Activated CD8-positive, alpha-beta T cell treated with anti-CD3 and anti-CD28 coated beads for 36 hours (primary cell): ENCODE measurements at regions of chr12 and their contacts with region 1.

Region 1: GRCh38 chr12:121793838-121794533 is 498 bp upstream of the RHOF start:
- DNase-seq: peak; percentile 95
- ATAC-seq: peak; percentile 60
- H3K4me3 Mint-ChIP-seq: peak overlapping the region; percentile 89
- H3K27ac Mint-ChIP-seq: peak overlapping the region; percentile 91
- H3K4me1 Mint-ChIP-seq: peaks cover 54% of the 10 kb centered on the region
- H3K27me3 Mint-ChIP-seq: no peaks in the 10 kb centered on the region
- CTCF ChIP-seq: peak; percentile 99

Region 2: GRCh38 chr12:121688966-121689365 is 105.0 kb before region 1 on chr12:
- CTCF ChIA-PET with region 1: interaction called, 102 read pairs
- POLR2A ChIA-PET with region 1: interaction called, 3 read pairs
- intact Hi-C with region 1: loop called (anchors 5 kb)
- DNase-seq: no peak
- ATAC-seq: no peak
- H3K4me3 Mint-ChIP-seq: no peak overlapping the region
- H3K27ac Mint-ChIP-seq: no peak overlapping the region
- H3K4me1 Mint-ChIP-seq: peaks cover 5% of the 10 kb centered on the region
- H3K27me3 Mint-ChIP-seq: no peaks in the 10 kb centered on the region
- CTCF ChIP-seq: no peak

Region 3: DNA sequence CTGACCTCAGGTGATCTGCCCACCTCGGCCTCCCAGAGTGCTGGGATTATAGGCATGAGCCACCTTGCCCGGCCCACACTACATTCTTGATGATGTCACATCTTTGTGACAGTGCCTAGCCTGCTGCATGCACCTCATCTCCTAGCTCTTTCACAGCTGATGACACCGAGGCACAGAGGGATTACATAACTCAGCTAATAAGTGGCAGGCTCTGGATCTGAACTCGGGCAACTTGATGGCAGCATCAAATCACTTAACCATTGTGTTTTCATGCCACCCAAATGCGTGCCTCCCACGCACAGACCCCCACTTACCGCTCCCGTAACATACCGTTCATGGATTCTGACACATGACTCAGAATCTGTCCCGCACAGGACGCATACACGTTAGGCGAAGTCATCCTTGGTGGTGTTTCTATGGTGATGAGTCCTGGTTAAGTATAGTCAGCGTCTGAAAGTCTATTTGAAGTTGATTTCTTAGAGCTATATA is 74.0 kb before region 1 on chr12:
- CTCF ChIA-PET with region 1: interaction called, 27 read pairs
- POLR2A ChIA-PET with region 1: interaction called, 4 read pairs
- intact Hi-C with region 1: no loop called
- DNase-seq: peak; percentile 12
- ATAC-seq: peak; percentile 34
- H3K4me3 Mint-ChIP-seq: no peak overlapping the region
- H3K27ac Mint-ChIP-seq: no peak overlapping the region
- H3K4me1 Mint-ChIP-seq: peaks cover 12% of the 10 kb centered on the region
- H3K27me3 Mint-ChIP-seq: no peaks in the 10 kb centered on the region
- CTCF ChIP-seq: no peak

Region 4: GRCh38 chr12:121839106-121839992 is 45.4 kb after region 1 on chr12:
- CTCF ChIA-PET with region 1: interaction called, 48 read pairs
- POLR2A ChIA-PET with region 1: interaction called, 4 read pairs
- intact Hi-C with region 1: no loop called
- DNase-seq: peak; percentile 100
- ATAC-seq: peak; percentile 98
- H3K4me3 Mint-ChIP-seq: peak overlapping the region; percentile 99
- H3K27ac Mint-ChIP-seq: peak overlapping the region; percentile 92
- H3K4me1 Mint-ChIP-seq: peaks cover 16% of the 10 kb centered on the region
- H3K27me3 Mint-ChIP-seq: no peaks in the 10 kb centered on the region
- CTCF ChIP-seq: peak; percentile 58

Region 5: GRCh38 chr12:121894633-121895032 is 100.6 kb after region 1 on chr12:
- CTCF ChIA-PET with region 1: interaction called, 86 read pairs
- POLR2A ChIA-PET with region 1: interaction called, 13 read pairs
- intact Hi-C with region 1: loop called (anchors 2 kb)
- DNase-seq: no peak
- ATAC-seq: peak; percentile 37
- H3K4me3 Mint-ChIP-seq: no peak overlapping the region
- H3K27ac Mint-ChIP-seq: peak overlapping the region; percentile 79
- H3K4me1 Mint-ChIP-seq: peaks cover 36% of the 10 kb centered on the region
- H3K27me3 Mint-ChIP-seq: no peaks in the 10 kb centered on the region
- CTCF ChIP-seq: peak; percentile 22